Activated B cell treated with CpG ODN at 0.5 μM for 24 hours (primary cell): ENCODE measurements at regions of chr3 and their contacts with region 1.

Region 1: GRCh38 chr3:11140054-11140712 is 14.1 kb upstream of the HRH1 start:
- DNase-seq: peak; percentile 56
- ATAC-seq: peak; percentile 99
- H3K4me3 Mint-ChIP-seq: peak overlapping the region; percentile 39
- H3K27ac Mint-ChIP-seq: peak overlapping the region; percentile 57
- H3K4me1 Mint-ChIP-seq: peaks cover 34% of the 10 kb centered on the region
- H3K27me3 Mint-ChIP-seq: no peaks in the 10 kb centered on the region
- CTCF ChIP-seq: no peak

Region 2: DNA sequence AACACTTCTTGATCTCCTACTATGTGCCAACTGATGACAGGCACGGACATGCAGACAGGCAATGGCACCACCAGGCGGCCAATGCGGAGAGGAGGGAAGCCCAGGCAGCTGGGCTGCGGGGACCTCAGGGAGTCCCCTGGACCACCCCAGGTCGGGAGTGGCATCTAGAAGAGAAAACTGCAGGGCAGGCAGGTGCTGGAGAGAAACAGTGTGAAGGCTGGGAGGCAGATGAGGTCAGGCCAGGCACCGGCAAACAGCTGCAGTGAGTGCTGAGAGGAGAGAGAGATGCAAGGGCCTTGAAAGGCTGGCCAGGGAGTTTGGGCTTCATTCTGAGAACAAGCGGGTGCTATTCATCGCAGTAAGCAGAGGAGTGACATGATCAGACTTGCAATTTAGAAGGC is 118.6 kb before region 1 on chr3:
- CTCF ChIA-PET with region 1: no interaction called
- POLR2A ChIA-PET with region 1: no interaction called
- intact Hi-C with region 1: no loop called
- DNase-seq: no peak
- ATAC-seq: no peak
- H3K4me3 Mint-ChIP-seq: no peak overlapping the region
- H3K27ac Mint-ChIP-seq: no peak overlapping the region
- H3K4me1 Mint-ChIP-seq: no peaks in the 10 kb centered on the region
- H3K27me3 Mint-ChIP-seq: peaks cover 4% of the 10 kb centered on the region
- CTCF ChIP-seq: no peak

Region 3: GRCh38 chr3:11155341-11156025 is 15.3 kb after region 1 on chr3:
- CTCF ChIA-PET with region 1: interaction called, 3 read pairs
- POLR2A ChIA-PET with region 1: no interaction called
- intact Hi-C with region 1: loop called (anchors 1 kb)
- DNase-seq: no peak
- ATAC-seq: peak; percentile 25
- H3K4me3 Mint-ChIP-seq: peak overlapping the region; percentile 70
- H3K27ac Mint-ChIP-seq: no peak overlapping the region
- H3K4me1 Mint-ChIP-seq: peaks cover 25% of the 10 kb centered on the region
- H3K27me3 Mint-ChIP-seq: peaks cover 45% of the 10 kb centered on the region
- CTCF ChIP-seq: no peak

Region 4: GRCh38 chr3:11662402-11662990 is 522.3 kb after region 1 on chr3:
- CTCF ChIA-PET with region 1: no interaction called
- POLR2A ChIA-PET with region 1: no interaction called
- intact Hi-C with region 1: no loop called
- DNase-seq: no peak
- ATAC-seq: no peak
- H3K4me3 Mint-ChIP-seq: no peak overlapping the region
- H3K27ac Mint-ChIP-seq: no peak overlapping the region
- H3K4me1 Mint-ChIP-seq: peaks cover 1% of the 10 kb centered on the region
- H3K27me3 Mint-ChIP-seq: no peaks in the 10 kb centered on the region
- CTCF ChIP-seq: no peak